ENCODE measurements at regions of chr2 and their contacts with region 1.

Region 1: GRCh38 chr2:84314901-84315330 is 144.2 kb downstream of the SUCLG1 start:
- DNase-seq: peak; percentile 87
- H3K4me3 Mint-ChIP-seq: no peak overlapping the region
- H3K27ac Mint-ChIP-seq: no peak overlapping the region
- H3K4me1 Mint-ChIP-seq: no peaks in the 10 kb centered on the region
- H3K27me3 Mint-ChIP-seq: peaks cover 26% of the 10 kb centered on the region

Region 2: DNA sequence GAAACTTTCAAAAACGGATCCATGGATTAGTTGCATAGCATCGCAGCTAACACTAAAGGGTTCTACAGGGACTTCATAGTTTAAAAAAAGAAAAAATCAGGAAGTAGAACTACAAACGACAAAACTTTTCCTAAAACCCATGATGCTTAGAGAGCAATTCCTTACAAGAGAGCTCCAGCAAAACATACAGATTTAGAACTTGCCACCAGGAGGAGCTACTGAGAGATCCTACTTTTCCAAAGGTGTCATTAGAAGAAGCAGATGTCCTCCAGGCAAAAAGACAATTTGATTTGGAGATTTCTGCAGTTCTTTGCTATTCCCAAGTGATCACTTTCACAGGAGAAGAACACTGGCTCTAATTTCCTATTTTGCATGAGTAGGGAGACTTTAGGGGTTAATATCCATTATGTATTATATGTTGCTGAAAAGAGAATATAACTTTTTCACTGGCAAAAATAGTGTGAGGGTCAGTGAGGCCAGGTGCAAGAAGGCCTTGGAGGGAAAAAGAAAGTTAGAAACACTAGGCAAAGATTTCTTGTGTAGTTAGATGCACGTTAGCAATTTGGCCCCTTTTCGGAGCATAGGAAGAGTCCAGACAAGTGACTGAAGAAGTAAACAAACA is 292.0 kb before region 1 on chr2:
- CTCF ChIA-PET with region 1: interaction called, 12 read pairs
- DNase-seq: peak; percentile 30
- H3K4me3 Mint-ChIP-seq: no peak overlapping the region
- H3K27ac Mint-ChIP-seq: no peak overlapping the region
- H3K4me1 Mint-ChIP-seq: no peaks in the 10 kb centered on the region
- H3K27me3 Mint-ChIP-seq: no peaks in the 10 kb centered on the region

Region 3: DNA sequence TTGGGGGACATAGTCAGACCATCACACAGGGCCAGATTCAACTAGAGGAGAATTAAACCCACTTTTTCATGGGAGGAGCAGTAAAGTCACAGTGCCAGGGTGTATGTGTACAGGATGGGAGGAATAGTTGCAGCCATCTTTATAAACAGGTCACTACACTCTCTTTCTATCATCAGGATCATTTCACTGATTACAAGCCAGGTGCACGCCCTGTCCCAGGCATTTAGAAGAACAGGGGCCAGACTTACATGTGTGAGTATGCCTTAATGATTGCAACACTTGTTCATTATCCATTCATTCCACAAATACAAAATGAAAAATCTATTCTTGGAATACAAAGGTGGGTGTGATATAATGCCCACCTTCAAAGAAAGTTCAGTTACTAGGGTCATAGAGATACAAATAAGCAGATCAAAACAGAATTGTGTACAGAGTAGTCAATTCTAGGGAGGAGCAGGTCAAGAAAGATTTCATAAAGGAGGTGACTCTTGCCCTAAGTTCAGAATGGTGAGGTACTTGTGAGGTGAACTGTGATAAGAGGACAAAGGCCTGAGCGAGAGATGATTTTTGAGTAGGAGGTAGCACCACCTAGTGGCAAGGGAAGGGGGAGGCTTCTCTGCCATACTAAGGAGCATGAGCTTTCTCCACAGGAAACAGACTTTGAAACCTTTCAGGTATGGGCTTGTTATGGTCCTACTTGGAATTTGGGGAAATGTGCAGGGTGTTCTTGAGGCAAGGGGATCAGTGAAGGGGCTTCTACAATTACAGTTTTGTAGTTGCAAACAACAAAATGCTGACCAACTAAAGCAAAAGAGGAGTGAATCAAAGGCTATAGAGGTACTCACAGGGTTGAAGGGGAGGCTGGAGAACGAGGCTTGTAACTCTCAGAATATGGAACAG is 12.2 kb before region 1 on chr2:
- CTCF ChIA-PET with region 1: interaction called, 41 read pairs
- DNase-seq: peak; percentile 57
- H3K4me3 Mint-ChIP-seq: no peak overlapping the region
- H3K27ac Mint-ChIP-seq: no peak overlapping the region
- H3K4me1 Mint-ChIP-seq: no peaks in the 10 kb centered on the region
- H3K27me3 Mint-ChIP-seq: peaks cover 3% of the 10 kb centered on the region

Region 4: GRCh38 chr2:84326831-84327432 is 12.0 kb after region 1 on chr2:
- CTCF ChIA-PET with region 1: interaction called, 11 read pairs
- DNase-seq: no peak
- H3K4me3 Mint-ChIP-seq: no peak overlapping the region
- H3K27ac Mint-ChIP-seq: no peak overlapping the region
- H3K4me1 Mint-ChIP-seq: no peaks in the 10 kb centered on the region
- H3K27me3 Mint-ChIP-seq: peaks cover 7% of the 10 kb centered on the region

Measured in activated naive CD4-positive, alpha-beta T cell treated with anti-CD3 and anti-CD28 coated beads, Interleukin-2, amount 10 ng/mL, durations not matched to agents 7 days and 5 days (primary cell).